IMR-90 (cell line): ENCODE measurements at regions of chr6 and their contacts with region 1.

Region 1: GRCh38 chr6:75065523-75065922 is 140.3 kb downstream of the COL12A1 start:
- DNase-seq: peak; percentile 25
- ATAC-seq: peak; percentile 64
- H3K4me3 ChIP-seq: no peak overlapping the region
- H3K27ac ChIP-seq: no peak overlapping the region
- H3K4me1 ChIP-seq: no peaks in the 10 kb centered on the region
- H3K27me3 ChIP-seq: no peaks in the 10 kb centered on the region
- CTCF ChIP-seq: 0 out of 2 replicates have a peak, but pooled peaks have one; percentile 12
- POLR2A ChIP-seq: no peak; the same call in 1 of the 2 replicates
- RAD21 ChIP-seq: no peak

Region 2: DNA sequence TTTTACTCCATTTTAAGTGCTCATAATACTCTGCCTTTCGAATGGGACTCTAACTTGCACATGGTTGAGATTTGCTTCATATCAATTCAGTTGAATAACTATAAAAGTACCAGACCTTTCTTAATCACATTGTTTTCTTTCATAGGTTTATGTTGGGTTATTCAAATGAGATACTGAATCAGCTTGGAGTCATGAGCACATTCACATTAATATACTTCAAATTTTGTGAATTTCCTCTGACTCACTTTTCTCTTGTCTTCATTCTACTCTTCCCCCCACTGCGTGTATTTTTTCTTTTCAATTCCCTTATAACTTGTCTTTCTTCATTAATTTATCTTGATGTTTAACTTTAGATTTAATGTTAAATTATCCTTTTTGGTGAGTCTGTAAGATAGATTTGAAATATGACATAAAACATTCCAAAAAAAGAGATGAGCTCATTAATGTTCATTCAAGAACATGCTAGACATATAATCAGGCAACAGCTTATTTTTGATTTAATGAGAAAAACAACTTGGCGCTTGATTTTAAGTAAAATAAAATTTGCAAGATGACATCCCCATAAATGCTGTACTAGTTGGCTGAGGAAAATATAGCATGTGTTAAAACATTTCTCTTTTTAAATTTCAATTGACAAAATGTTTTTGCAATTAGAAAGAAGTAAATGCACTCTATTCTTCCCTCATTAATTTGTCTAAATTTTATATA is 633.5 kb before region 1 on chr6:
- CTCF ChIA-PET with region 1: no interaction called
- POLR2A ChIA-PET with region 1: interaction called, 15 read pairs
- dilution Hi-C with region 1: no loop called
- in situ Hi-C with region 1: no loop called
- intact Hi-C with region 1: no loop called
- DNase-seq: peak; percentile 69
- ATAC-seq: peak; percentile 37; the same call in 1 of the 2 replicates
- H3K4me3 ChIP-seq: no peak overlapping the region
- H3K27ac ChIP-seq: no peak overlapping the region
- H3K4me1 ChIP-seq: no peaks in the 10 kb centered on the region
- H3K27me3 ChIP-seq: no peaks in the 10 kb centered on the region
- CTCF ChIP-seq: no peak
- POLR2A ChIP-seq: no peak
- RAD21 ChIP-seq: no peak

Region 3: GRCh38 chr6:74798302-74798701 is 267.2 kb before region 1 on chr6:
- CTCF ChIA-PET with region 1: no interaction called
- POLR2A ChIA-PET with region 1: interaction called, 10 read pairs
- dilution Hi-C with region 1: no loop called
- in situ Hi-C with region 1: no loop called
- intact Hi-C with region 1: no loop called
- DNase-seq: no peak
- ATAC-seq: no peak
- H3K4me3 ChIP-seq: no peak overlapping the region
- H3K27ac ChIP-seq: no peak overlapping the region
- H3K4me1 ChIP-seq: no peaks in the 10 kb centered on the region
- H3K27me3 ChIP-seq: no peaks in the 10 kb centered on the region
- CTCF ChIP-seq: no peak
- POLR2A ChIP-seq: no peak
- RAD21 ChIP-seq: no peak

Region 4: GRCh38 chr6:74964871-74965441 is 100.6 kb before region 1 on chr6:
- CTCF ChIA-PET with region 1: no interaction called
- POLR2A ChIA-PET with region 1: no interaction called
- dilution Hi-C with region 1: no loop called
- in situ Hi-C with region 1: no loop called
- intact Hi-C with region 1: loop called (anchors 5 kb)
- DNase-seq: peak; percentile 57
- ATAC-seq: peak; percentile 75
- H3K4me3 ChIP-seq: no peak overlapping the region
- H3K27ac ChIP-seq: no peak overlapping the region
- H3K4me1 ChIP-seq: no peaks in the 10 kb centered on the region
- H3K27me3 ChIP-seq: no peaks in the 10 kb centered on the region
- CTCF ChIP-seq: no peak
- POLR2A ChIP-seq: no peak
- RAD21 ChIP-seq: no peak